GM12878 (cell line): ENCODE measurements at regions of chr4 and their contacts with region 1.

Region 1: GRCh38 chr4:147638942-147639341 is 21.7 kb downstream of the TMEM184C start:
- DNase-seq: peak; percentile 2
- ATAC-seq: peak; percentile 83
- H3K4me3 ChIP-seq: no peak overlapping the region
- H3K27ac ChIP-seq: no peak overlapping the region
- H3K4me1 ChIP-seq: peaks cover 5% of the 10 kb centered on the region; the same call in 1 of the 2 replicates
- H3K27me3 ChIP-seq: no peaks in the 10 kb centered on the region
- CTCF ChIP-seq: no peak
- EP300 ChIP-seq: no peak
- POLR2A ChIP-seq: no peak
- RAD21 ChIP-seq: no peak

Region 2: DNA sequence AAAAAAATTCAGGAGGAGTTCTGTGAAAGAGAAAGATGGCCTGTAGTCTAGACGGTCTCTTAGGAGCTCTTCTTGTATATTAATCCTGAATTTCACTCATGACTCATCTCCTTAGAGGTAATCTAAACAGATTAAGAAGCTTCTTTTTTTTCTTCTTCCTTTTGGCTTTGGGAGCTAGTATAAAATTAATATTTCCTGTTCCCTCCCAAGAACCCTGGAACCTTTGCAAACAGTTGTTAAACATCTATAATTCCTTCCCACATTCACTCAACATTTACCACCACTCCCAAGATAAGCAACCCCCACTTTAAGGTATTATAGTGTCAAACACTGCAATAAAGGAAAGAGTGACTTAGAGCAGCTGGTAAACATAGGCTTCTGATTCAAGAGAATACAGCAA is 304.5 kb before region 1 on chr4:
- CTCF ChIA-PET with region 1: no interaction called
- POLR2A ChIA-PET with region 1: no interaction called
- RAD21 ChIA-PET with region 1: no interaction called
- SMC1A ChIA-PET with region 1: no interaction called
- in situ Hi-C with region 1: no loop called
- intact Hi-C with region 1: no loop called
- DNase-seq: no peak
- ATAC-seq: no peak
- H3K4me3 ChIP-seq: no peak overlapping the region
- H3K27ac ChIP-seq: no peak overlapping the region
- H3K4me1 ChIP-seq: no peaks in the 10 kb centered on the region
- H3K27me3 ChIP-seq: no peaks in the 10 kb centered on the region
- CTCF ChIP-seq: no peak
- EP300 ChIP-seq: no peak
- POLR2A ChIP-seq: no peak
- RAD21 ChIP-seq: no peak

Region 3: DNA sequence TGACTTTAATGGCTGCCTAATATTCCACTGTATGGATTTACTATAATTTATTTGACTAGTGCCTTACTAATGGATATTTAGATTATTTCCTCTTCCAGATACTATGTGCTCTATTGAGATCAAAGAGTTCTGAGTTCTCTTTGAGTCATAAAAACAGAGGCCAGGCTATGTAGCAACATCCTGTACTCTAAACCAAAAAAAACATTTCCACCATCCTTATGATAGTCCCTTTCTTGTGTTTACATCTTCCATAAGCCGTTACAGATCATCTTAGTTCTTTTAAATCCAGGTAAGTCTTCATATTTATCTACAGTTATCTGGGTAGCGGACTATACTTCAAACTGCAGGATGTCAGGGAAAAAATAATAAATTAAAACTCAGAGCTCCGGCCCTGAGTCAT is 78.3 kb before region 1 on chr4:
- CTCF ChIA-PET with region 1: no interaction called
- POLR2A ChIA-PET with region 1: no interaction called
- RAD21 ChIA-PET with region 1: no interaction called
- SMC1A ChIA-PET with region 1: no interaction called
- in situ Hi-C with region 1: no loop called
- intact Hi-C with region 1: no loop called
- DNase-seq: no peak
- ATAC-seq: no peak
- H3K4me3 ChIP-seq: no peak overlapping the region
- H3K27ac ChIP-seq: no peak overlapping the region
- H3K4me1 ChIP-seq: no peaks in the 10 kb centered on the region
- H3K27me3 ChIP-seq: no peaks in the 10 kb centered on the region
- CTCF ChIP-seq: no peak
- EP300 ChIP-seq: no peak
- POLR2A ChIP-seq: no peak
- RAD21 ChIP-seq: no peak

Region 4: GRCh38 chr4:147605499-147605898 is 33.4 kb before region 1 on chr4:
- CTCF ChIA-PET with region 1: no interaction called
- POLR2A ChIA-PET with region 1: no interaction called
- RAD21 ChIA-PET with region 1: no interaction called
- SMC1A ChIA-PET with region 1: no interaction called
- in situ Hi-C with region 1: no loop called
- intact Hi-C with region 1: no loop called
- DNase-seq: no peak
- ATAC-seq: no peak; the same call in 2 of the 3 replicates
- H3K4me3 ChIP-seq: no peak overlapping the region
- H3K27ac ChIP-seq: no peak overlapping the region
- H3K4me1 ChIP-seq: no peaks in the 10 kb centered on the region
- H3K27me3 ChIP-seq: no peaks in the 10 kb centered on the region; a peak in 1 of 4 replicates
- CTCF ChIP-seq: no peak
- EP300 ChIP-seq: no peak
- POLR2A ChIP-seq: no peak
- RAD21 ChIP-seq: no peak

Region 5: GRCh38 chr4:147678796-147679549 is 40.0 kb after region 1 on chr4:
- CTCF ChIA-PET with region 1: no interaction called
- POLR2A ChIA-PET with region 1: interaction called, 4 read pairs
- RAD21 ChIA-PET with region 1: no interaction called
- SMC1A ChIA-PET with region 1: interaction called, 3 read pairs
- in situ Hi-C with region 1: no loop called
- intact Hi-C with region 1: loop called (anchors 5 kb)
- DNase-seq: no peak
- ATAC-seq: no peak
- H3K4me3 ChIP-seq: no peak overlapping the region
- H3K27ac ChIP-seq: no peak overlapping the region
- H3K4me1 ChIP-seq: no peaks in the 10 kb centered on the region
- H3K27me3 ChIP-seq: no peaks in the 10 kb centered on the region
- CTCF ChIP-seq: peak; percentile 2 to 35 (median 27); a peak in 4 of 6 replicates
- EP300 ChIP-seq: no peak
- POLR2A ChIP-seq: no peak
- RAD21 ChIP-seq: no peak